GM12878 (cell line): ENCODE measurements at regions of chr7 and their contacts with region 1.

Region 1: DNA sequence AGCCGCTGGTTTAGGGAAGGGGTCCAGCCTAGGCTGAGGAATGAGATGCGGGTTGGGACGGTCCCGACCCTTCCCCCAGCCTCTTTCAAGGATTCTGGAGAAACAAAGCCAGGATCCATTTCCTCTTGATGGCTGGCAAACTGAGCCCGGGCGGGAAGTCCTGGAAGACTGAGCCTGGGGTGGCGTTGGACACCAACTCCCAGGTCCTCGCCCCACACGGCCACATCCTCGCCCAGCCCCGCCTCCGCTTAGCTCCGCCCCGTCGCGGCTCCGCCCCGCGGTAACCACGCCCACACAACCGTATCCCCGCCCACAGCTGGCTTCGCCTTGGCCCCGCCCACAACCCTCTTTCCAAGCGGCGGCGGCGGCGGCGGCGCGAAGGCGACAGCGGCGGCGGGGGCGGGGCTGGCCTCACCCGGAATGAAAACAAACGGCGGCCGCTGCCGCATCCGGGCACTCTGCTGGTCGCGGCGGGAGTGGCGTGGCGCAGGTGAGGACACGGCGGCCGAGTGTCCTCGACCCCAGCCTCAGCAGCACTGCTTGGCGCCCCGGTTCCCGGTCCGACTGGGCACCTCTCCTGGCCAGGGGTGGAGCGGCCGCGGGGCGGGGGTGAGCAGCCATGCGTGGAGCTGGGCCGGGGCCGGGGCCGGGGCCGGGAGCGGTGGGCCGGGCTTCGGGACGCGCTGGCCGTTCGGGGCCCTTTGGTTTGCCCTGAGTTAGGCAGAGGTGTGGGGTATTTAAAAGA is at the start of gene NUB1:
- DNase-seq: no peak
- ATAC-seq: peak; percentile 80
- H3K4me3 ChIP-seq: peak within 1 kb of the TSS; percentile 65
- H3K27ac ChIP-seq: peak within 1 kb of the TSS; percentile 81
- H3K4me1 ChIP-seq: peaks cover 25% of the 10 kb centered on the region
- H3K27me3 ChIP-seq: no peaks in the 10 kb centered on the region
- CTCF ChIP-seq: no peak
- EP300 ChIP-seq: no peak
- POLR2A ChIP-seq: peak; percentile 95
- RAD21 ChIP-seq: no peak
- polyA plus RNA-seq, gene NUB1: 24.1 to 28.8 TPM

Region 2: DNA sequence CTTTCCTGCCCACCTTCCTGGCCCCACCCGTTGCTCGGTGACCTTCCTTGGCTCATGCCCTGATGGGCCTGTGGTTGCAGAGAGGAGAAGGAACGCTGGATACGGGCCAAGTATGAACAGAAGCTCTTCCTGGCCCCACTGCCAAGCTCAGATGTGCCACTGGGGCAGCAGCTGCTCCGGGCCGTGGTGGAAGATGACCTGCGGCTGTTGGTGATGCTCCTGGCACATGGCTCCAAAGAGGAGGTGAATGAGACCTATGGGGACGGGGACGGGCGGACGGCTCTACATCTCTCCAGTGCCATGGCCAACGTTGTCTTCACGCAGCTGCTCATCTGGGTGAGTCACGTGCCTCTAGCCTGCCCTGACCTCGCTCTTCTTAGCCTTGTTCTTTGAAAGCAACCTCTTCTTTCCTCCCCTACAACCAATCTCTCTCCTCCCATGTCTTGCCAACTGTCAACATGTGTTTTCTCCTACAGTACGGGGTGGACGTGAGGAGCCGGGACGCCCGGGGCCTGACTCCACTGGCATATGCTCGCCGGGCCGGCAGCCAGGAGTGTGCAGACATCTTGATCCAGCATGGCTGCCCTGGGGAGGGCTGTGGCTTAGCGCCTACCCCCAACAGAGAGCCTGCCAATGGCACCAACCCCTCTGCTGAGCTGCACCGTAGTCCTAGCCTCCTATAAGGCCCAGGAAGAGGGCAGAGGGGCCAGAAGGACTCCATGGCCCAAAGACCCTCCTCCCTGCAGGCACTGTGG is 198.1 kb before region 1 on chr7:
- CTCF ChIA-PET with region 1: no interaction called
- POLR2A ChIA-PET with region 1: no interaction called
- RAD21 ChIA-PET with region 1: no interaction called
- SMC1A ChIA-PET with region 1: no interaction called
- in situ Hi-C with region 1: no loop called
- intact Hi-C with region 1: no loop called
- DNase-seq: no peak
- ATAC-seq: no peak
- H3K4me3 ChIP-seq: no peak overlapping the region
- H3K27ac ChIP-seq: no peak overlapping the region
- H3K4me1 ChIP-seq: no peaks in the 10 kb centered on the region
- H3K27me3 ChIP-seq: no peaks in the 10 kb centered on the region
- CTCF ChIP-seq: no peak
- EP300 ChIP-seq: no peak
- POLR2A ChIP-seq: no peak
- RAD21 ChIP-seq: no peak

Region 3: GRCh38 chr7:151226875-151227782 is 114.4 kb before region 1 on chr7 and contains the start of gene ABCF2:
- CTCF ChIA-PET with region 1: interaction called, 3 read pairs
- POLR2A ChIA-PET with region 1: no interaction called
- RAD21 ChIA-PET with region 1: no interaction called
- SMC1A ChIA-PET with region 1: no interaction called
- in situ Hi-C with region 1: no loop called
- intact Hi-C with region 1: loop called (anchors 5 kb)
- DNase-seq: peak; percentile 85
- ATAC-seq: peak; percentile 100
- H3K4me3 ChIP-seq: peak within 1 kb of the TSS; percentile 89
- H3K27ac ChIP-seq: peak within 1 kb of the TSS; percentile 22
- H3K4me1 ChIP-seq: no peaks in the 10 kb centered on the region
- H3K27me3 ChIP-seq: no peaks in the 10 kb centered on the region
- CTCF ChIP-seq: no peak
- EP300 ChIP-seq: no peak
- POLR2A ChIP-seq: peak; percentile 82
- RAD21 ChIP-seq: no peak
- polyA plus RNA-seq, gene ABCF2: 39.6 to 50.9 TPM